Left ventricle myocardium superior (tissue), 1 donor: ENCODE measurements at regions of chr2 and their contacts with region 1.

Region 1: DNA sequence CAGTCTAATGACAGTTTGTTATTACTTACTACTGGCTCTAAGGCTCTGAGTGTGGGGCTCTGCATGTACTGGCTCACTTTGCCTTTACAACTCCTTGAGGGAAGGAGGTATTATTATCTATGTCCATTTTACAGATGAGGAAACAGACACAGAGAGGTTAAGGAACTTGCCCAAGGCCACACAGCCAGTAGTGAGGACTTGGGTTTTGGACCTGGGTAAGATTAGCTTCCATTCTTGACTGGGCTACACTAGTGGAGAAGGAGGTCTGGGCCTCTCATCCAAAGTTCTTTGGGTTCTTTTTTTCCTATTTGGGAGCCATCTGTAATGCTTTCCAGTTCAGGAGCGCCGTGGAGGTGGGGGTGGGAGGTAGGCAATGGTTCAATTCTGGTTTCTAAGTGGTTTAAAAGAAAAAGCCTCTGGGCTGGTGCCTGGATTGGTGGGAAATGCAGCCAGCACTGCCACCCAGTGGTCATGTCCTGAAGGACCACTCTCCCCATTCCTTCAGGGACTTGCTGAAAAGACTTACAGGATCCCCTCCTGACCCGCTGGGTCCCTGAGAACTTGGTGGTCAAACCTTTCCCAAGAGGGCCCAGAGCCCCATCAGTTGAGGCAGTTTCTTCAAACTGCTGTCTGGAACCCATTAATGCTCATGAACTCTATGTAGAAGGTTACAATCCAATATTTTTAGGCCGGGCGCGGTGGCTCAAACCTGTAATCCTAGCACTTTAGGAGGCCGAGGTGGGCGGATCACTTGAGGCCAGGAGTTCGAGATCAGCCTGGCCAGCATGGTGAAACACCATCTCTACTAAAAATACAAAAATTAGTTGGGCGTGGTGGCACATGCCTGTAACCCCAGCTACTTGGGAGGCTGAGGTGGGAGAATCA is 38.6 kb upstream of the NOTO start:
- DNase-seq: peak; percentile 71
- ATAC-seq: peak; percentile 85

Region 2: GRCh38 chr2:72892506-72893173 is 271.1 kb before region 1 on chr2:
- intact Hi-C with region 1: loop called (anchors 5 kb)
- DNase-seq: peak; percentile 79
- ATAC-seq: peak; percentile 79

Region 3: DNA sequence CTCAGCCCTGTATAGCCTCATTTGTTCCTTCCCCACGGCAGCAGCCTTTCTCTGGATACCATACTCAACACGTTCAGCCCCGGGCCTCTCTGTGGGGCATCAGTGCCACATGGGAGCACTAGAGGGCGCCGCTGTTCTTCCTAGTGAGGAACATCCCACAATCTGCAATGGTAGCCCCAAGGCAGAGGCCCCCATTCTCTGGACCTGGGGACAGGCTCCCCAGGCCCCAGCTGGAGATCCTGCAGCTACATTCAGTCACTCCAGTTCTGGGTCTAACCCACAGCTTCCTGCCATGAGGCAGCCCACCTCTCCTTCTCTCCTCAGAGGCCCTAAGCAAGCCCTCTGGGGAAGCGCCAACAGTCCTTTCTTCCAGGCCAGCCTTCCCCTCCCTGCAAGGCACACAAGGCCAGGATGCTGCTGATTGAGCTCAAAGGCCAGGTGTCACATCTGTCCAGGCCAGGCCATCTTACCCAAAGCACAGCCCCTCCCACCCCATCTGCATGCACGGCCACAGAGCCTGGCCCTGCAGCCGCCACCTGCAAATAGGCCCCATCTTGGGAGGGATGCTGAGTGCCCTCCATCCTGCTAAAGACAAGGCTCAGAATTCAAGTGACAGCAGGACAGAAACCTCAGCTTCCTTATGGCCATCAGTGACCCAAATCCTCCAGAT is 77.9 kb before region 1 on chr2:
- intact Hi-C with region 1: loop called (anchors 5 kb)
- DNase-seq: peak; percentile 90
- ATAC-seq: peak; percentile 73